ENCODE measurements at regions of chr18 and their contacts with region 1.

Region 1: DNA sequence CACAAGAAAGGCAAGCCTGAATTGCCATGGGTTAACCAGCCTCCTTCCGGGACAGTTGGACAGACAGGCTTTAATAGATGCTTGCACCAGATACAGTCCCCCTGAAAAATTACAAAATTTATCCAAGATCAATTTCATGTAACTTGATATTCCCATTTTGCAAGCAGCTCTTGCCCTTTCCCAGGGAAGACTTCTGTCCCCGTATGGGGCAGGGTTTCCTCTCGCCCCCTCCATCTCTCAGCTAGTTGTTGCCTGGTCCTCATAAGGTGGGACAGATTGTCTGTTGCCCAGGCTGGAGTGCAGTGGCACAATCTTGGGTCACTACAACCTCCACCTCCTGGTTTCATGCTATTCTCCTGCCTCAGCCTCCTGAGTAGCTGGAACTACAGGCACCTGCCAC is 61.2 kb downstream of the TTC39C start:
- DNase-seq: no peak
- ATAC-seq: peak; percentile 14
- H3K4me3 ChIP-seq: no peak overlapping the region
- H3K27ac ChIP-seq: no peak overlapping the region
- H3K4me1 ChIP-seq: peaks cover 27% of the 10 kb centered on the region
- H3K27me3 ChIP-seq: 0 out of 5 replicates have a peak, but pooled peaks cover 0 to 1% of the 10 kb centered on the region in 2 experiments
- CTCF ChIP-seq: no peak
- EP300 ChIP-seq: no peak
- POLR2A ChIP-seq: no peak
- RAD21 ChIP-seq: no peak

Region 2: DNA sequence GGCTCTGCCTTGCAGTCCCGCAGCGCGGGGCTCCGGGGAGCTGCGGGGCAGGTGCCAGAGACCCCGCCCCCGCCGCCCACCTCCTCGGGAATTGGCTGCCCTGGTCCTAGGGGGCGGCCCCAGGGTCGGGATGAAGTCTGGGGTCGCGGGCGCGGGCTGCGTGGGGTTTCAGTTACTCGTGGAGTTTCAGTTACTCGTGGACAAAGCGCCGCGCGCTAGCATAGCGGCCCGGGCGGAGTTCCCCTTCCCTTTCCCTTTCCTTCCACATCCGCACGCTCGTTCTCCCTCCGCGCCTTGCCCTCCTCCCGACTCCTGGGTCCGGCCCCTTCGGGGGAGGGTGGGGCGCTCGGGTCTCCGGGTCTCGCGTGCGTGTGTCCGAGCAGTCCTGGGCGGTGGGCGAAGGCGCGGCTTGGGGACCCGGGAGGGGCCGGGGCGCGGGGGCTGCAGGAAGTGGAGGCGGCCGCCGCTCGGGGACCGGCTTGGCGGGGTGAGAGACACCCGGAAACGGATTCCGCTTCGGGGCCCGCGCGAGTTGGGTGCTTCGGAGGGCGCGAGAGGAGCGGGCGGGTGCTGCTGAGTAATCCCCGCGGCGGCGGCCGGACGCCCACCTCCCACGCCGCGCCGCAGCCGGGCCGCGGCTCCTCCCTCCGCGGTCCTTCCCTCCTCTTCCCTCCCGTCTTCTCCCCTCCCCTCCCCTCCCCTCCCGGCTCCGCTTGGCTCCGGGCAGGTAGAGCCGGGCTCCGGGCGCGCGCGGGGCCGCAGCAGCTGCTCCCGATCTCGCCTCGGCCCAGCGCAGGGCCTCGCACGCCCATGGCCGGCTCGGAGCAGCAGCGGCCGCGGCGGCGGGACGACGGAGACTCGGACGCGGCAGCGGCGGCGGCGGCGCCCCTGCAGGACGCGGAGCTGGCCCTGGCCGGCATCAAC is 61.4 kb before region 1 on chr18 and contains the start of gene TTC39C:
- CTCF ChIA-PET with region 1: no interaction called
- POLR2A ChIA-PET with region 1: interaction called, 3 read pairs
- in situ Hi-C with region 1: no loop called
- intact Hi-C with region 1: loop called (anchors 1 kb)
- DNase-seq: no peak
- ATAC-seq: peak; percentile 77
- H3K4me3 ChIP-seq: peak within 1 kb of the TSS; percentile 52 to 79 (median 77)
- H3K27ac ChIP-seq: peak within 1 kb of the TSS; percentile 19
- H3K4me1 ChIP-seq: peaks cover 23% of the 10 kb centered on the region
- H3K27me3 ChIP-seq: peaks cover 0 to 35% of the 10 kb centered on the region in 2 experiments; a peak in 3 of 5 replicates
- CTCF ChIP-seq: no peak
- EP300 ChIP-seq: no peak
- POLR2A ChIP-seq: no peak
- RAD21 ChIP-seq: no peak
- total RNA-seq, gene TTC39C: 25.9 and 28.1 TPM in 2 replicates

Region 3: GRCh38 chr18:24031916-24032315 is 43.8 kb before region 1 on chr18:
- CTCF ChIA-PET with region 1: no interaction called
- POLR2A ChIA-PET with region 1: no interaction called
- in situ Hi-C with region 1: no loop called
- intact Hi-C with region 1: loop called (anchors 5 kb)
- DNase-seq: no peak
- ATAC-seq: no peak
- H3K4me3 ChIP-seq: no peak overlapping the region
- H3K27ac ChIP-seq: no peak overlapping the region
- H3K4me1 ChIP-seq: peaks cover 16% of the 10 kb centered on the region
- H3K27me3 ChIP-seq: no peaks in the 10 kb centered on the region
- CTCF ChIP-seq: no peak
- EP300 ChIP-seq: no peak
- POLR2A ChIP-seq: no peak
- RAD21 ChIP-seq: no peak

Region 4: DNA sequence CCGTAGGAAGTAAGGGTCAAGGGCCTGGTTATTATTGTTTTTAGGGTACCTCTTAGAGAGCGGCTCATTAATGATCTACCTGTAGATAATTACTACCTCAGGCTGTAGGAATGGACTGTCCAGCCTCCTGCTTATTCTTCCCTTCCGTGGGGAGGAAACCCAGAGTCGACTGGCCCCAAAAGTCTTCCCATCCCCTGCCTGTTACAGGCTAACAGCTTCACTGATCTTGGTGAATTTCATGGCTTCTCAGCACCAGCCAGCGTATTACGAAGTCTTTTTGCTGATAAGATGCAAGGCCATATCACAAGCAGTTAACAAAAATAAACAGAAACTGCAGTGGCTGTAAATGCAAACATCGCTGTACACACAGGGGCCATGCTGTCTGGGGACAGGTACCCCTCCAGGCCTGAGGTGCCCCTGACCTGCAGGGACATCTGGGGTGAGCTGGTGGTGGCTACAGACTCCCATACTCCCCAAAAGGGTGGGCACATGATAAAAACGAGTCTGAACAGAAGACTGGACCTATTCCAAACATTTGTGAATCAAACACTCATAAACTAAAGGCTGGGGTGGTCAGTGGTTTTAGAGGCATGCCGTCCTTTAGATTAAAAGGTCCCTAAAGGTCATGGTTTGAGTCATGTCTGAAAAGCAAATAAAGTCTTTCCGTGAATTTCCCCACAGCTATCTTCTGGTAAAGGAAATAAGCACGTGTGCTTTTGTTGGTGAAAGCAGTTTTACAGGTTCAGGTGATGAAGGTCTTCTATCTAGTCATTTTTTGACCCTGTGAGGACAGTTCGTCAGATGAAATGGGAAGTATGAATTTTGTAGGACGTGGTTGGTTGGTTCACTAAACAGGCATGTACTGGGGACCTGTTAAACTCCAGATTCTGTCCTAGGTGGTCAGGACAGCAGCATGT is 24.4 kb before region 1 on chr18:
- CTCF ChIA-PET with region 1: no interaction called
- POLR2A ChIA-PET with region 1: interaction called, 9 read pairs
- in situ Hi-C with region 1: no loop called
- intact Hi-C with region 1: loop called (anchors 1 kb)
- DNase-seq: peak; percentile 90
- ATAC-seq: peak; percentile 86
- H3K4me3 ChIP-seq: peak overlapping the region; percentile 8 to 60 (median 52); a peak in 5 of 6 replicates
- H3K27ac ChIP-seq: peak overlapping the region; percentile 88
- H3K4me1 ChIP-seq: peaks cover 48% of the 10 kb centered on the region
- H3K27me3 ChIP-seq: no peaks in the 10 kb centered on the region
- CTCF ChIP-seq: no peak
- EP300 ChIP-seq: peak in 1 of 2 experiments; percentile 65; a peak in 2 of 4 replicates
- POLR2A ChIP-seq: no peak
- RAD21 ChIP-seq: no peak

Region 5: DNA sequence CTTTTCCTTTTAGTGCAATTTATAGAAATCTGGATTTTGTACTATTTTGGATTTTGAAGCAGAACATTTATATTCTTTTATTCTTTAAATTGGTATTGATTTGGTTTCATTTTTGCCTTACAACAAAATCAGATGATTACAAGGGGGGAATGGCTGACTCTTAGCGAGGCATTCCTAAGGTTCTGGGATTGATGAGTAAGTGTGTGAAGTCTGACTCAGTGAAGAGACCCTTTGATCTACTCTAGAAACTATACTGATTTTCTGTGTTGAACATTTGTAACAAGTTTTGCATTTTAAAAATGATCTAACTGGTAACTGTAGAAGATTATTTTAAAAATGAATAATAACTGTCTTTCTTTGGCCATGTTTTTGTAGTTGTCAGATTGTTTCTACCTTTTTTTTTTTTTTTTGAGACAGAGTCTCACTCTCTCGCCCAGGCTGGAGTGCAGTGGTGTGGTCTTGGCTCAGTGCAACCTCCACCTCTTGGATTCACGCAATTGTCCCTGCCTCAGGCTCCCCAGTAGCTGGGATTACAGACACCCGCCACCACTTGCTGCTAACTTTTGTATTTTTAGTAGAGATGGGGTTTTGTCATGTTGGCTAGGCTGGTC is 12.5 kb before region 1 on chr18:
- CTCF ChIA-PET with region 1: no interaction called
- POLR2A ChIA-PET with region 1: interaction called, 5 read pairs
- in situ Hi-C with region 1: no loop called
- intact Hi-C with region 1: loop called (anchors 2 kb)
- DNase-seq: peak; percentile 21
- ATAC-seq: peak; percentile 71
- H3K4me3 ChIP-seq: no peak overlapping the region
- H3K27ac ChIP-seq: peak overlapping the region; percentile 54
- H3K4me1 ChIP-seq: peaks cover 54% of the 10 kb centered on the region
- H3K27me3 ChIP-seq: no peaks in the 10 kb centered on the region
- CTCF ChIP-seq: no peak
- EP300 ChIP-seq: no peak
- POLR2A ChIP-seq: no peak
- RAD21 ChIP-seq: no peak

Region 6: GRCh38 chr18:24296276-24296675 is 220.5 kb after region 1 on chr18:
- CTCF ChIA-PET with region 1: no interaction called
- POLR2A ChIA-PET with region 1: no interaction called
- in situ Hi-C with region 1: no loop called
- intact Hi-C with region 1: no loop called
- DNase-seq: no peak
- ATAC-seq: no peak
- H3K4me3 ChIP-seq: no peak overlapping the region
- H3K27ac ChIP-seq: no peak overlapping the region
- H3K4me1 ChIP-seq: no peaks in the 10 kb centered on the region
- H3K27me3 ChIP-seq: no peaks in the 10 kb centered on the region
- CTCF ChIP-seq: no peak
- EP300 ChIP-seq: no peak
- POLR2A ChIP-seq: no peak
- RAD21 ChIP-seq: no peak